Panc1 (cell line): ENCODE measurements at regions of chr11 and their contacts with region 1.

Region 1: DNA sequence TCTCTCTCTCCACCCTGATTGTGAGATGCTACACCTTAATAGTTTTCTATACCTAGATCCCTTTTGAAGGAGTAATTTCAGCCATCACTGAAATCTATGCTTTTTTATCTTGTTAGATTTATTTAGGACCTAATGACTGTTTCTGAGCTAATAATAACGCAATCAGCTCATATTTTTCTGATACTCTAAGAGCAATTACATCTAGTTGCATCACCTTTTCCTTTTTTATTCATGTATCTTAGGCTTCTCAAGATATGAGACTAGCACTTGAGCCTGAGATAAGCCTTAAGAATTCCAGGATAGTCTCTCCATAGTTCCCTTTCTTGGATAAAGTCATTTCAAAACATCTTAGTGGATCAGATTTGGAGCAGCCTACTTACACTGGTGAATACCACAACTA is 25.1 kb upstream of the CAVIN3 start:
- DNase-seq: no peak
- ATAC-seq: no peak
- H3K4me3 ChIP-seq: no peak overlapping the region
- H3K27ac ChIP-seq: no peak overlapping the region
- H3K4me1 ChIP-seq: no peaks in the 10 kb centered on the region
- H3K27me3 ChIP-seq: no peaks in the 10 kb centered on the region
- CTCF ChIP-seq: no peak

Region 2: GRCh38 chr11:5983443-5983842 is 361.9 kb before region 1 on chr11:
- CTCF ChIA-PET with region 1: interaction called, 12 read pairs
- POLR2A ChIA-PET with region 1: no interaction called
- in situ Hi-C with region 1: no loop called
- intact Hi-C with region 1: no loop called
- DNase-seq: no peak
- ATAC-seq: no peak
- H3K4me3 ChIP-seq: no peak overlapping the region
- H3K27ac ChIP-seq: no peak overlapping the region
- H3K4me1 ChIP-seq: no peaks in the 10 kb centered on the region
- H3K27me3 ChIP-seq: peaks cover 2% of the 10 kb centered on the region; the same call in 1 of the 2 replicates
- CTCF ChIP-seq: peak; percentile 16; the same call in 1 of the 2 replicates